ENCODE measurements at regions of chr5 and their contacts with region 1.

Region 1: GRCh38 chr5:38968665-38969064 is 105.5 kb downstream of the RICTOR start:
- DNase-seq: no peak
- H3K4me3 ChIP-seq: no peak overlapping the region
- H3K4me3 Mint-ChIP-seq: no peak overlapping the region
- H3K27ac ChIP-seq: no peak overlapping the region
- H3K27ac Mint-ChIP-seq: no peak overlapping the region
- H3K4me1 ChIP-seq: no peaks in the 10 kb centered on the region
- H3K4me1 Mint-ChIP-seq: no peaks in the 10 kb centered on the region
- H3K27me3 ChIP-seq: no peaks in the 10 kb centered on the region
- H3K27me3 Mint-ChIP-seq: peaks cover 0 to 1% (median 0%) of the 10 kb centered on the region in 3 donors
- CTCF ChIP-seq: no peak

Region 2: DNA sequence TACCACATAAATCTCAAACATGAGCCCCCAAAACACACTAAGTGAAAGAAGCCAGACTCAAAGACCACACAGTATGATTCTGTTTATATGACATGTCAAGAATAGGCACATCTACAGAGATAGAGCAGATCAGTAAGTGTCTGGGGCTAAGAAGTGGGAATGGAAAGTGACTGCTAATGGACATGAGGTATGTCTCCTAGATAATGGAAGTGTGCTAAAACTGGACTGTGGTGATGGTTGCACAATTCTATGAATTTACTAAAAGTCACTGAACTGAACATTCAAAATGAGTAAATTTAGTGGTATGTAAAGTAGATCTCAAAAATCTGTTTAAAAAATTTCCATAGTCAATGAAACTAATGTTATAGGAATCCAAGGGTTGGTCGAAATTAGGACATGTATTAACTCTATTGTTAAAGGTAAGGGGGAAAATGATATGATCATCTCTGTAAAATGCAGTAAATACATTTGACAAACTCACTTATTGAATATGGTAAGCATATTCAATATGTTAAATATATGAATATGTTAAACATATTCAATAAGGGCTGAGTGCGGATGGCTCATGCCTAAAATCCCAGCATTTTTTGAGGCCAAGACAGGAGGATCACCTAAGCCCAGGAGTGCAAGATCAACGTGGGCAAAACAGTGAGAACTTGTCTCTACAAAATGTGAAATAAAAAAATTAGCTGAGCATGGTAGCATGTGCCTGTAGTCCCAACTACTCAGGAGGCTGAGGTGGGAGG is 1649.5 kb before region 1 on chr5:
- intact Hi-C with region 1: loop called in 1 of 2 experiments (anchors 10 kb)
- DNase-seq: no peak
- H3K4me3 ChIP-seq: no peak overlapping the region
- H3K4me3 Mint-ChIP-seq: no peak overlapping the region
- H3K27ac ChIP-seq: no peak overlapping the region
- H3K27ac Mint-ChIP-seq: peak overlapping the region in 2 of 7 donors; percentile 16 to 62
- H3K4me1 ChIP-seq: no peaks in the 10 kb centered on the region
- H3K4me1 Mint-ChIP-seq: peaks cover 2% of the 10 kb centered on the region
- H3K27me3 ChIP-seq: no peaks in the 10 kb centered on the region
- H3K27me3 Mint-ChIP-seq: peaks cover 0 to 1% (median 0%) of the 10 kb centered on the region in 3 donors
- CTCF ChIP-seq: no peak

Region 3: DNA sequence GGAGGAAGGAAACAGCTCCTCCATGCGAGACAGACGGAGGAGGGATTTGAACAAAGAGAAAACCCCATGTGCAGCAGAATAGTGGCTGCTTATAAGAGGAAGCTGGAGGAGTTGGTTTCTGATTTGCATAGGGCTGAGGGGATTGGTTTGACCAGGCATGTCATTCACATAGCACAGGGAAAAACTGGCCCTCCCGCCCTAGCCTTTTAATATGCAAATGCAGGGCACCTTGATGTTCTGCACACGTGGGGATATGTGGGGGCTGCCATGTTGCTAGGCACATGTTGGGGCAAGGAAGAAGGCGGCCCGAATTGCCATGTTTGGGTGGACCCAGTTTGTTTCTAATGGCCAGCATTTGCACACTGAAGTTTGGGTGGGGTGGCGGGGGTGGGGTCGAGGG is 80.6 kb before region 1 on chr5:
- intact Hi-C with region 1: no loop called
- DNase-seq: no peak
- H3K4me3 ChIP-seq: no peak overlapping the region
- H3K4me3 Mint-ChIP-seq: no peak overlapping the region
- H3K27ac ChIP-seq: no peak overlapping the region
- H3K27ac Mint-ChIP-seq: no peak overlapping the region
- H3K4me1 ChIP-seq: no peaks in the 10 kb centered on the region
- H3K4me1 Mint-ChIP-seq: no peaks in the 10 kb centered on the region
- H3K27me3 ChIP-seq: peaks cover 0 to 11% of the 10 kb centered on the region in 2 donors
- H3K27me3 Mint-ChIP-seq: peaks cover 6 to 19% (median 16%) of the 10 kb centered on the region in 3 donors
- CTCF ChIP-seq: no peak

Region 4: GRCh38 chr5:39119404-39120051 is 150.9 kb after region 1 on chr5:
- intact Hi-C with region 1: loop called in 1 of 2 experiments (anchors 10 kb)
- DNase-seq: no peak
- H3K4me3 ChIP-seq: no peak overlapping the region
- H3K4me3 Mint-ChIP-seq: no peak overlapping the region
- H3K27ac ChIP-seq: no peak overlapping the region
- H3K27ac Mint-ChIP-seq: no peak overlapping the region
- H3K4me1 ChIP-seq: no peaks in the 10 kb centered on the region
- H3K4me1 Mint-ChIP-seq: no peaks in the 10 kb centered on the region
- H3K27me3 ChIP-seq: no peaks in the 10 kb centered on the region
- H3K27me3 Mint-ChIP-seq: peaks cover 0 to 2% (median 0%) of the 10 kb centered on the region in 3 donors
- CTCF ChIP-seq: no peak

Measured in CD14-positive monocyte (primary cell).